Heart left ventricle (tissue), 16 donors: ENCODE measurements at regions of chr5 and their contacts with region 1.

Region 1: DNA sequence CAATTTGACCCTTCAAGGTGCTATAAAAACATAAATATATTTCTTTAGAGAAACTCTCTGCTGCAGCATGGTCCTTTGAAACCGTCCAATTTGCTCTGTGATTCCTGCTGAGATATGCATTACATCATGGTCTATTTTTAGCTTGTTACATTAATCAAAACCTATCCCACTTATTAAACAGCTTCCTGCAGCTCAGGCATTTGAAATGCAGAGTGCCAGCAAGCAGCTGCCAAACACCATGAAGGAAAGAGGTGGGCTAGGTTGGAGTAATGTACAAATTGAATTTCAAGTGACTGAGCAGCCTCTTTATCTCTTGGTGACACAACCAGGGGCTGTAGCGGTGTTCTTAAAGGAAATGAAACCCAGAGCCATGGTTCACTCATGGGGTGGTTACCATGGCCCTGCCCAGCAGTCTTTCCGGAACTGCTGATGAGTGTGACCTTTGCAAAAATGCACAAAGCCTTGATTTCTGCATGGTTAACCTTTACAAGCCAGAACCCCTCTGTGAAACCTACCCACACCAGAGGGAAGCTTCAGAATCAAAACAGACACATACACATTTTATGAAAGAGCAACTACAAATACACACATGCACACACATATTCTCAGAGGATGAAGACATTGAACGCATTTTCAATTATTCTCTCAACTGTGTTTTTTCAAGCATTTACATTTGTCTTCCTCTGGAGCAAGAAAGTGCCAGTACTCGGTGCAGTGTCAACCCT is 155.8 kb upstream of the ZNF608 start:
- DNase-seq: no peak
- ATAC-seq: peak in 3 of 4 donors; percentile 21 to 57 (median 26)
- H3K4me3 ChIP-seq: no peak overlapping the region
- H3K27ac ChIP-seq: no peak overlapping the region
- H3K4me1 ChIP-seq: peaks cover 12 to 35% (median 31%) of the 10 kb centered on the region in 12 donors
- H3K27me3 ChIP-seq: no peaks in the 10 kb centered on the region
- CTCF ChIP-seq: no peak
- POLR2A ChIP-seq: no peak

Region 2: DNA sequence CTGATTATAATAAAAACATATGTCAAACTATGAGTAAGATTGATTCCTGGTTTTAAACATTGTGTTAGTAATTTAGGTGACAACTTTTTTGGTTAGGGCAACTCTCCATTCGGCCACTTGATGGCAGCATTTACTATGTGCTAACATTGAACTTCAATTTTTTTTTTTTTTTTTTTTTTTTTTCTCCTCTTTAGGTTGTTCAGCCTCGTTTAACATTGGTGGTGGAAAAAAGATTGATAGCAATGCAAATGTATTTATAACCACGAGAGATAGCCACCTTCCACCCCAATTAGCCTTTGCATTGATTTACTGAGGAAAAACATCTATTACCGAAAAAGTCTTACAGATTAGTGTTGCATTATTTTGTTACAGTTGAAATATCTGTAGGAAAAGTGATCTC is 1231.2 kb before region 1 on chr5:
- intact Hi-C with region 1: loop called in 1 of 10 experiments (anchors 5 kb)
- DNase-seq: peak in 4 of 5 donors; percentile 28 to 37 (median 31)
- ATAC-seq: peak in 1 of 4 donors; percentile 25
- H3K4me3 ChIP-seq: no peak overlapping the region
- H3K27ac ChIP-seq: no peak overlapping the region
- H3K4me1 ChIP-seq: peaks cover 0 to 26% (median 11%) of the 10 kb centered on the region in 12 donors
- H3K27me3 ChIP-seq: no peaks in the 10 kb centered on the region
- CTCF ChIP-seq: peak; percentile 73 to 93 (median 83)
- POLR2A ChIP-seq: no peak

Region 3: GRCh38 chr5:123700398-123701287 is 1201.6 kb before region 1 on chr5:
- intact Hi-C with region 1: loop called in 1 of 10 experiments (anchors 10 kb)
- DNase-seq: peak in 3 of 5 donors; percentile 16 to 38 (median 24)
- ATAC-seq: peak; percentile 65 to 87 (median 74)
- H3K4me3 ChIP-seq: no peak overlapping the region
- H3K27ac ChIP-seq: peak overlapping the region in 6 of 12 donors; percentile 4 to 53 (median 44)
- H3K4me1 ChIP-seq: peaks cover 0 to 30% (median 9%) of the 10 kb centered on the region in 12 donors
- H3K27me3 ChIP-seq: no peaks in the 10 kb centered on the region
- CTCF ChIP-seq: no peak
- POLR2A ChIP-seq: no peak

Region 4: GRCh38 chr5:124754206-124754927 is 147.9 kb before region 1 on chr5:
- intact Hi-C with region 1: loop called in 9 of 10 experiments (anchors 2 to 10 kb)
- DNase-seq: no peak
- ATAC-seq: no peak
- H3K4me3 ChIP-seq: no peak overlapping the region
- H3K27ac ChIP-seq: no peak overlapping the region
- H3K4me1 ChIP-seq: peaks cover 0 to 4% (median 0%) of the 10 kb centered on the region in 12 donors
- H3K27me3 ChIP-seq: peaks cover 0 to 3% (median 0%) of the 10 kb centered on the region in 9 donors
- CTCF ChIP-seq: no peak
- POLR2A ChIP-seq: no peak

Region 5: DNA sequence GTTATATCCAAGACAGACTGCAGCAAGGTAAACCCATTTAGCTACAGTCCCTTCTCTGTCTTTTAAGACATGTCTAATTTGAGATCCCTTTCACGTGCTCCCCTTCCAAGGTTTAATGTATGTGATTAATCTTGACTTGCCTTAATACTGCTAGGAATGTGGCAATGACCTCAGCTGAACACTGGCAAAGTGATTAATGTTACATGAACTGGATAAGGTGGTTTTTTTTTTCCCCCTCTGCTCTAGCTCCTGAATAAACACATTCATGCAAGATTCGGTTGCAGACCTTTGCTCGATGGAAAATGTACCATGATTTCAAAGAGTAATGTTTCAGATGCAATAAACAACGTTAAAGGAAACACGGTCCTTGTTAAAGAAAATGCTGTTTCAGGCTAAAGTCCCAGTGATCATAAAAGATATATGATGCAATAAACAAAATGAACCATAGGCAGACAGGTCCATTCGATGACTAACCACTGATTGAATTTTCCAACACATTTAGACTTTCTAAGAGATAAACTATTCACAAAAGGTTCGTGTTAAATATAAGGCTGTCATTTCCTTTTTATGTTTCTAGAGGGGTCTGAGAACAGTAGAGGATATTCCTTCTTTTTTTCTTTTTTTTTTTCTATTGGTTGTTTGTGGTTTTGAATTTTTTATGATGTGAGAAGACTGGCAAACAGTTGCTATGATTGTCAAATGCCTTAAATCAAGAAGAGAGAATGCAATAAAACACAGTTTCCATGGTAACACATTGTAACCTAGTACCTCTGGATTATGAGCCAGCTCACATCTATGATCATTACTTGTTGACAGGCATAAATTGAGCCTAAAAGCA is 111.1 kb before region 1 on chr5:
- intact Hi-C with region 1: no loop called
- DNase-seq: no peak
- ATAC-seq: no peak
- H3K4me3 ChIP-seq: no peak overlapping the region
- H3K27ac ChIP-seq: no peak overlapping the region
- H3K4me1 ChIP-seq: peaks cover 0 to 3% (median 0%) of the 10 kb centered on the region in 12 donors
- H3K27me3 ChIP-seq: no peaks in the 10 kb centered on the region
- CTCF ChIP-seq: no peak
- POLR2A ChIP-seq: no peak

Region 6: DNA sequence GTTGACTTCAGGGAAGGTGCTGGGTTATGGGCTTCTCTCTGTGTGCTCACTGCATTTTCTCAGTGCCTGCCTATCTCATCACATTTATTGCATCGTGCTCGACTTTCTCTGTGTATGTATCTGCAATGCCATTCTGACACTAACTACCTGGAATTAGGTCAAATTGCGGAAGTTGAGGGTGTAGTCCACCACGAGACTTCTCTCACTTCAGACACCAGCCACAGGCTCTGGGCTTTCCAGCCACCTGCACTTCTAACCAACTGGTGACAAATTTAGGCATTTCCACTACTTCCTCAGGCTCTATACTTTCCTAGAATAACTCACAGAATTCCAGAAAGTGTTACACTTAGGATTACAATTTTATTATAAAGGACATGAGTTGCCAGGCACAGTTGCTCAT is 32.8 kb after region 1 on chr5:
- intact Hi-C with region 1: no loop called
- DNase-seq: no peak
- ATAC-seq: no peak
- H3K4me3 ChIP-seq: no peak overlapping the region
- H3K27ac ChIP-seq: no peak overlapping the region
- H3K4me1 ChIP-seq: peaks cover 0 to 7% (median 0%) of the 10 kb centered on the region in 12 donors
- H3K27me3 ChIP-seq: no peaks in the 10 kb centered on the region
- CTCF ChIP-seq: no peak
- POLR2A ChIP-seq: no peak

Region 7: DNA sequence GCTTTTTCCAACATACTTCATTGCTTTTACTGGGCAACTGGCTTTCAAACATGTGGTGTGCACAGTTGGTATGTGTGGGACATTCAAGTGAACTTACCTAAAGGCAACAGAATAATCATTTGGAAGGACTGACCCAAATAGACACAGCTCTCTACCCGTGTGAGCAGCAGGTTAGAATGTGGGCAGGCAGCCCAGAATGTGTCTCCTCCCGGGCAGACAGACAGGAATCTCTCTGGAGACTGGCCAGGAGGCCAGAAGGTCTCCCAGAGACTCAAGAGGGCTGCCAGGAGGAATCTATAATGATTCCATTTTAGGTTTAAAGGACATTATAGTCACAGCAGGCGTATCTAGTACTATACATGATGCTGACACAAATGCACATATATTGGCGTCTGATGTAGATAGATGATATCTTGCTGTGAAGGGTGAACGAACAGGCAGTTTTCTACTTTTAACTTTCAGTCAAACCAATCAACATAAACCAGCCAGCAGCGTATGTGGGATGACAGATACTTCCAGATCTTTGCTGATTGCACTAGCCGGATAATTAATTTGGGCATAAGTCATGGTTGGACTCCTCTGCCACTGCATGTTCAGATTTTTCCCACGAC is 141.6 kb after region 1 on chr5:
- intact Hi-C with region 1: loop called in 2 of 10 experiments (anchors 5 to 10 kb)
- DNase-seq: peak; percentile 76 to 90 (median 86)
- ATAC-seq: peak; percentile 94 to 97 (median 96)
- H3K4me3 ChIP-seq: no peak overlapping the region
- H3K27ac ChIP-seq: peak overlapping the region in 5 of 12 donors; percentile 7 to 55 (median 28)
- H3K4me1 ChIP-seq: peaks cover 0 to 34% (median 25%) of the 10 kb centered on the region in 12 donors
- H3K27me3 ChIP-seq: no peaks in the 10 kb centered on the region
- CTCF ChIP-seq: no peak
- POLR2A ChIP-seq: no peak

Region 8: DNA sequence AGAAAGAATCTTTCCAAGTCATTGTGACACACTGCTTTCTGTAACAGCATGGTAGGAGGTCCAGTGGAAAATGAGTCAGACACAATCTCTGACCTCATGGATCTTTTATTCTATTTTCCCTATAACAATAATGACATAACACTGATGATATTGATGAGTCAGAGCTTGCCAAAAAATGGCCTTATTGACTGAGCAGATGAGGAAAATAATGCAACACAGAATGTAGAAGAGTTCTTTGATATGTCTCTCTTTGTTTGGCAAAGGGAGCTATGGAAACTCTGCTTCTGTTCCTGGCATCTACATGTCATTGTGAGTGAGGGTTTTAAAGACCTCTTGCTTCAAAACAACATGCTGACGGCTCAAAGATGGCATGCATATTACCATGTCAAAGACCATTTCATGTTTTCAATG is 287.3 kb after region 1 on chr5:
- intact Hi-C with region 1: loop called in 2 of 10 experiments (anchors 10 kb)
- DNase-seq: no peak
- ATAC-seq: no peak
- H3K4me3 ChIP-seq: no peak overlapping the region
- H3K27ac ChIP-seq: no peak overlapping the region
- H3K4me1 ChIP-seq: peaks cover 0 to 13% (median 2%) of the 10 kb centered on the region in 12 donors
- H3K27me3 ChIP-seq: no peaks in the 10 kb centered on the region
- CTCF ChIP-seq: no peak
- POLR2A ChIP-seq: no peak

Region 9: GRCh38 chr5:125198270-125198974 is 296.2 kb after region 1 on chr5:
- intact Hi-C with region 1: loop called in 2 of 10 experiments (anchors 5 to 10 kb)
- DNase-seq: peak; percentile 65 to 91 (median 86)
- ATAC-seq: peak in 3 of 4 donors; percentile 68 to 76 (median 69)
- H3K4me3 ChIP-seq: no peak overlapping the region
- H3K27ac ChIP-seq: peak overlapping the region in 9 of 12 donors; percentile 8 to 74 (median 28)
- H3K4me1 ChIP-seq: peaks cover 0 to 35% (median 4%) of the 10 kb centered on the region in 12 donors
- H3K27me3 ChIP-seq: no peaks in the 10 kb centered on the region
- CTCF ChIP-seq: no peak
- POLR2A ChIP-seq: no peak